ENCODE measurements at regions of chr22 and their contacts with region 1.

Region 1: GRCh38 chr22:43923631-43924464 is at the start of gene PNPLA3:
- DNase-seq: peak; percentile 90
- ATAC-seq: peak; percentile 94
- H3K4me3 Mint-ChIP-seq: peak within 1 kb of the TSS; percentile 59
- H3K27ac Mint-ChIP-seq: peak within 1 kb of the TSS; percentile 51
- H3K4me1 Mint-ChIP-seq: peaks cover 4% of the 10 kb centered on the region
- H3K27me3 Mint-ChIP-seq: peaks cover 14% of the 10 kb centered on the region
- total RNA-seq, gene PNPLA3: 0.54 to 0.55 TPM

Region 2: DNA sequence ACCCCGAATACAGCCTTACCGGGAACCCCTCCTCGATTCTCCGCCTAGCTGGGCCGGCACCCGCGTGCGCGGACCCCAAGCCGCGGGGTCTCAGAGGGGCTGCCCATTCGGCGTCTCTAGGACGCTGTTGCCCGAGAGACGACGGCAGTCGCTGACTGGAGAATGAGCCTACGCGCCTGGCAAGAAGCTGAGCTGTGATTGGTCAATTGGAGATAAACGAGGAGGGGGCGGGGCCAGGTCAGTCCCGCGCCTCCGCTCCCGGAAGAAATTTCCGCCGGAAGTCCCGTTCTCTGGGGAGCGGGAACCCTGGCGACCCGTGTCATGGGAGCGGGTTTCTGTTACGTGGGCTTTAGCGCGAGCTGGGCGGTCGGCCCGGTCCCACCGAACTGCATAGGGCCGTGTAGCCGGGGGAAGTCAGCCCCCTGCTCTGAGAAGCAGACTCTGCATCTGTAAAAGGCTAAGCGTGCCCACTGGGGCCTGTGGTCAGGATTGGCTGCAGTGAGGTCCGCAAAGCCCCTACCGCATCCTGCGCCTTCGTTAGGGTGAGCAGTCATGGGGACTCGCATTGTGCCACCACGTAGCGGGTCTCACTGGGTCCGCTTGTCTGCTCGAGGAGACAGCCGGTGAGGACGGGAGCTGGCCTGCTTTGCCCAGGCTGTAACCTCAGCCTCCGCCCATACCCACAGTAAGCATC is 111.6 kb before region 1 on chr22 and contains the start of gene EFCAB6:
- CTCF ChIA-PET with region 1: no interaction called
- POLR2A ChIA-PET with region 1: no interaction called
- intact Hi-C with region 1: loop called in 1 of 2 experiments (anchors 1 kb)
- DNase-seq: peak; percentile 95
- ATAC-seq: peak; percentile 89
- H3K4me3 Mint-ChIP-seq: peak within 1 kb of the TSS; percentile 87
- H3K27ac Mint-ChIP-seq: peak within 1 kb of the TSS; percentile 90
- H3K4me1 Mint-ChIP-seq: peaks cover 23% of the 10 kb centered on the region
- H3K27me3 Mint-ChIP-seq: no peaks in the 10 kb centered on the region
- total RNA-seq, gene EFCAB6: 0.56 to 0.71 TPM